Left ventricle myocardium inferior (tissue), 1 donor: ENCODE measurements at regions of chr14 and their contacts with region 1.

Region 1: DNA sequence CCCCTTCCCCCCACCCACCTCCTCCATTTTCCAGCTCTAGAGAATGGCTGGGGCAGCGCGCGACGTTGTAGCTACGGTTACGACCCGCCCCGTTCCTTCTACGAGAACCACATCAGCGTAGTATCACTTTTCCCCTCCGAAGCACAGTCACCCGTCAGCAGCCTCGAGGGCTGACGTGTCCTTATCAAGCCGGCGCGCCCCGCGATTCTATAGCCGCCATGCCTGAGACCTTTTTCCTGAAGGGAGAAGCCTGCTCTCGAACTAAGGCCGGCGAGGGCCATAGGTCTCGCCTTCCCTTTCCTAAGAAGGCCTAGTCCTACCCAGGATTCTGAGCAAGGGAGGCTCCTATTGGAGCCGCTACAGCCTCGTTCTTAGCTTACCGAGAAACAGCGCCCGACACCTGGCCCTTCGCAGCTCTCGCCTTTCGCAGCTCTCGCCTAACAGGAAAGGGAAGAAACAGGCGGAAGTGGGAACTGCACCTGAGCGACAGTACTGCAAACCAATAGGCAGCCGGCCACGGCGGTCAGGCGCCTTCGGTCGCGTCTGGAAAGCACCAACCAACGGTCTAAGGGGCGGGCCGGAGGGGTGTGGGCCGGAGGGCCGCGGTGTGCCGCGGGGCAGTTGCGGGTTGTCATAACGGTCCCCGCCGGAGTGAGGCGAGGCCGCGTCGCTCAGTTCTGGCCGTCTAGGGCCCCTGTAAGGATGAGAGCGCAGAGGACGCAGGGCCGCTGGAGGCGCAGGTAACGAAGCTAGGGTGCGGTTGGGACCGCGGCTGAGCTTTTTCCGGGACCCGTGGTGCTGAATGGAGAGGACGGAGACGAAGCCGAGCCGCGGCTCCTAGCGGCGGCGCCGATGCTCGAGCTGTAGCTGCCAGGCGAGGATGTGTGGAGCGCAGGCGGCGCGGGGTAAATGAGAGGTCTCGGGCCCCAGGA is at the starts of genes MGAT2 and RPL36AL:
- DNase-seq: peak; percentile 99
- H3K4me3 ChIP-seq: peak within 1 kb of the TSS; percentile 84
- H3K27ac ChIP-seq: peak within 1 kb of the TSS; percentile 95
- H3K4me1 ChIP-seq: peaks cover 60% of the 10 kb centered on the region
- H3K27me3 ChIP-seq: no peaks in the 10 kb centered on the region
- CTCF ChIP-seq: peak; percentile 49
- total RNA-seq, gene MGAT2: 12.0 TPM
- total RNA-seq, gene RPL36AL: 141 TPM

Region 2: GRCh38 chr14:49585803-49586672 is 34.4 kb before region 1 on chr14 and contains the start of gene RPS29:
- intact Hi-C with region 1: loop called (anchors 2 kb)
- DNase-seq: peak; percentile 97
- H3K4me3 ChIP-seq: peak within 1 kb of the TSS; percentile 86
- H3K27ac ChIP-seq: peak within 1 kb of the TSS; percentile 90
- H3K4me1 ChIP-seq: peaks cover 27% of the 10 kb centered on the region
- H3K27me3 ChIP-seq: no peaks in the 10 kb centered on the region
- CTCF ChIP-seq: no peak
- total RNA-seq, gene RPS29: 853 TPM

Region 3: GRCh38 chr14:49754570-49755097 is 134.2 kb after region 1 on chr14:
- intact Hi-C with region 1: no loop called
- DNase-seq: no peak
- H3K4me3 ChIP-seq: no peak overlapping the region
- H3K27ac ChIP-seq: no peak overlapping the region
- H3K4me1 ChIP-seq: no peaks in the 10 kb centered on the region
- H3K27me3 ChIP-seq: no peaks in the 10 kb centered on the region
- CTCF ChIP-seq: no peak